ENCODE measurements at regions of chr19 and their contacts with region 1.

Region 1: DNA sequence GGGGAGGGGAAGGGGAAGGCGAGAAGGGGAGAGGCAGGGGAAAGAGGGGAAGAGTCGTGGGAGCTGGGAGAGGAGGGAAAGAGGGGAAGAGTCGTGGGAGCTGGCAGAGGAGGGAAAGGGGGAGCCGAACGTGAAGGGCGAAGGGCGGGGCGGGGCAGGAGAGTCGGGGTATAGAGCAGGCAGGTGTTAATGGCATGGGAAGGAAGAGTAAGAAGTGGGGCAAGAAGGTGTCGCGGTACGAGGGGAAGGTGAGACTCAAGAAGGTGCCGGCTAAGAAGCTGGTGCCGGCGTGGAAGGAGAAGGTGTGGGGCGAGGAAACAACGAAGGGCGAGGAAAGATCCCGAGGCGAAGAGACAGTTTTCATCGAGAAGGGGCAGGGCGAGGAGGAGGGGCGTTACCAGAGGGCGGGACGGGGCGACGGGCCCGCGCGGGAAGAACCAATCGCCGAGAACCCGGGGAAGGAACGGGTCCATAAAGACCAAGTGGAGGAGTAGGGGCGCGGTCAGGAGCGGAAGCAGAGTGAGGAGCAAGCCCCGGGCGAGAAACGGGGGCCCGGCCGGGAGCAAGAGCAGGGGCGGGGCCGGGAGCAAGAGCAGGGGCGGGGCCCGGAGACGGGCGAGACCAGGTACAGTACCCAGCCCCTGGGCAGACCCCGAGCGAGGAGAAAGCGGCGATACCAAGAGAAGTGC is 463 bp downstream of the CATSPERG start:
- DNase-seq: peak; percentile 99
- H3K4me3 ChIP-seq: peak overlapping the region; percentile 65 to 74 (median 72)
- H3K27ac ChIP-seq: peak overlapping the region; percentile 92 to 99 (median 94)
- H3K4me1 ChIP-seq: peaks cover 5 to 21% (median 17%) of the 10 kb centered on the region in 4 donors
- H3K27me3 ChIP-seq: no peaks in the 10 kb centered on the region
- CTCF ChIP-seq: no peak
- EP300 ChIP-seq: no peak
- POLR2A ChIP-seq: peak; percentile 40

Region 2: GRCh38 chr19:37906869-37907734 is 429.0 kb before region 1 on chr19 and contains the start of gene SIPA1L3:
- intact Hi-C with region 1: loop called (anchors 10 kb)
- DNase-seq: peak; percentile 97
- H3K4me3 ChIP-seq: peak within 1 kb of the TSS; percentile 76 to 99 (median 91)
- H3K27ac ChIP-seq: peak within 1 kb of the TSS; percentile 70 to 81 (median 75)
- H3K4me1 ChIP-seq: peaks cover 12 to 23% (median 19%) of the 10 kb centered on the region in 4 donors
- H3K27me3 ChIP-seq: no peaks in the 10 kb centered on the region
- CTCF ChIP-seq: peak in 1 of 3 experiments; percentile 27
- EP300 ChIP-seq: no peak
- POLR2A ChIP-seq: peak; percentile 31
- total RNA-seq, gene SIPA1L3: 10.4 to 17.9 (median 13.2) TPM

Region 3: GRCh38 chr19:38243279-38243656 is 92.8 kb before region 1 on chr19:
- intact Hi-C with region 1: loop called (anchors 2 kb)
- DNase-seq: no peak
- H3K4me3 ChIP-seq: peak overlapping the region; percentile 1 to 39 (median 18)
- H3K27ac ChIP-seq: no peak overlapping the region
- H3K4me1 ChIP-seq: peaks cover 19 to 50% (median 50%) of the 10 kb centered on the region in 4 donors
- H3K27me3 ChIP-seq: peaks cover 0 to 10% (median 0%) of the 10 kb centered on the region in 4 donors
- CTCF ChIP-seq: no peak
- EP300 ChIP-seq: no peak
- POLR2A ChIP-seq: no peak

Region 4: DNA sequence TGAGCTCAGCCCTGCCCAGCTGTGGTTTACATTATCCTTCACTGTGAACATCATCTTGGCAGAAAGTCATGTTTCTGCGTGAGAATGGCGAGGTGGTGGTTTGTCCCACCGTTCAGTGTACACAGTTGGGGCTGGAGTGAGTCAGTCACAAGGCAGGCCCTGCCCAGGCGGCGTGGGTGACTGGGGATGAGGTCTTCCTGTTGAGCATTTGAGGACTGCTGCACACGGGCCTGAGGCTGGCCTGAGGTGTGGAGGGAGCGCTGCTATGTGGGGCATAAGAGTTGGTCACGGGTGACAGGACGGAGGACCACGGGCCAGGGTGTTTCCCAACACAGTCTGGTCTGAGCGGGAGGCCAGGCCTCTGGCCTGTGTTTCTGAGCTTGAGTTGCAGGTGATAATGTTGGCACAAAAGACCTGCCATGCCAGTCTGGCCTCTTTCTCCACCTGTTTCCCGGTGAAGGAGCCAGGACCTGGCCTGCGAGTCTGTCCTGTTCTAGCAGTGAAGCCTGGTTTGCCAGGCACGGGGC is 45.4 kb before region 1 on chr19:
- intact Hi-C with region 1: no loop called
- DNase-seq: no peak
- H3K4me3 ChIP-seq: no peak overlapping the region
- H3K27ac ChIP-seq: no peak overlapping the region
- H3K4me1 ChIP-seq: peaks cover 0 to 11% (median 7%) of the 10 kb centered on the region in 4 donors
- H3K27me3 ChIP-seq: no peaks in the 10 kb centered on the region
- CTCF ChIP-seq: no peak
- EP300 ChIP-seq: no peak
- POLR2A ChIP-seq: no peak

Region 5: GRCh38 chr19:38374429-38375176 is 38.5 kb after region 1 on chr19 and contains the start of gene PSMD8:
- intact Hi-C with region 1: loop called (anchors 2 kb)
- DNase-seq: peak; percentile 100
- H3K4me3 ChIP-seq: peak within 1 kb of the TSS; percentile 87 to 90 (median 90)
- H3K27ac ChIP-seq: peak within 1 kb of the TSS; percentile 90 to 92 (median 91)
- H3K4me1 ChIP-seq: peaks cover 23 to 38% (median 31%) of the 10 kb centered on the region in 4 donors
- H3K27me3 ChIP-seq: peaks cover 0 to 6% (median 0%) of the 10 kb centered on the region in 4 donors
- CTCF ChIP-seq: peak in 2 of 3 experiments; percentile 6 to 24
- EP300 ChIP-seq: no peak
- POLR2A ChIP-seq: peak; percentile 91
- total RNA-seq, gene PSMD8: 145 to 259 (median 212) TPM

Measured in esophagus muscularis mucosa (tissue), 4 donors.